Body of pancreas (tissue), 4 donors: ENCODE measurements at regions of chr16 and their contacts with region 1.

Region 1: DNA sequence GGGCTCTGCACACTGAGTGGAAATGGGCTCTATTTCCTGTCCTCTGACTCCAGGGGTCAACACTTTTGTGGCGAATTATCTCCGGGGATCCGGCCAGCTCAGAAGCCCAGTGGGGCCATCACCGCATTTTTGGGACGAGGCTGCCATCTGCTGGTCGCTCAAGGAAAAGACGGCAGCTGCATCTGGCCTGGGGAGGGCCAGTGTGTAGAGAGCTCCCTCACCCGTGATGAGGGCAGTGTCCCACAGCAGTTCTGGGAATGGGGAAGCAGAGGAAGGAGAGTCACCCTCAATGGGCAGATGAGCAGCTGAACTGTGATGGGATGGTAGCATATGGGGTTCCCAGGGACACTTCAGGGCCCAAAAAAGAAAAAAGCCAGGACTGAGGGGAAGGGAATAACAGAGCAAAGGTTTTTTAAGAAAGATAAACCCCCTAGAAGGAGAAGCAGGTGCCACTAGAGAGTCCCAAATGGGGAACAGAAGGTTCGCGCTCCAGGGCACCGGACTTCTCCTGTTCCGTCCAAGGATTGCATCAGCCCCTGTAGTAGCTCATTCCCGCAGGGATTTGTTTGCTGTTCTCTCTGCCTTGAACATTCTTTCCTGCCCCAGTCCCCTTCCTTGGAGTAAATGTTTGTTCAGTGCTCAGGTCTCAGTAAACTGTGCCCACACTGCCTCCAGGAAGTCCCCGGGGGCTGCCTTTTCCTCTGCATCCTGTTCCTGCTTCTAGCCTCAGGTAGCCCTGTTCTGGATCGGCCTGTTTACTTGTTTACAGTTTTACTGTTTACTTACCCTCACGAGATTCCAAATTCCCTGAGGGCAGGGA is 9.3 kb upstream of the ABCC12 start:
- DNase-seq: peak; percentile 70 to 74 (median 74)
- ATAC-seq: peak; percentile 88
- H3K4me3 ChIP-seq: no peak overlapping the region
- H3K27ac ChIP-seq: no peak overlapping the region
- H3K4me1 ChIP-seq: peaks cover 9% of the 10 kb centered on the region
- H3K27me3 ChIP-seq: no peaks in the 10 kb centered on the region
- CTCF ChIP-seq: peak; percentile 68 to 87 (median 82)
- POLR2A ChIP-seq: no peak

Region 2: GRCh38 chr16:47045023-47045422 is 1120.1 kb before region 1 on chr16:
- intact Hi-C with region 1: loop called (anchors 10 kb)
- DNase-seq: no peak
- ATAC-seq: no peak
- H3K4me3 ChIP-seq: no peak overlapping the region
- H3K27ac ChIP-seq: no peak overlapping the region
- H3K4me1 ChIP-seq: no peaks in the 10 kb centered on the region
- H3K27me3 ChIP-seq: no peaks in the 10 kb centered on the region
- CTCF ChIP-seq: no peak
- POLR2A ChIP-seq: no peak

Region 3: GRCh38 chr16:47141773-47142485 is 1023.2 kb before region 1 on chr16:
- intact Hi-C with region 1: loop called (anchors 10 kb)
- DNase-seq: peak; percentile 80 to 83 (median 82)
- ATAC-seq: peak; percentile 81
- H3K4me3 ChIP-seq: no peak overlapping the region
- H3K27ac ChIP-seq: no peak overlapping the region
- H3K4me1 ChIP-seq: peaks cover 22% of the 10 kb centered on the region
- H3K27me3 ChIP-seq: no peaks in the 10 kb centered on the region
- CTCF ChIP-seq: peak; percentile 74 to 93 (median 88)
- POLR2A ChIP-seq: no peak

Region 4: GRCh38 chr16:48231727-48232492 is 66.8 kb after region 1 on chr16:
- intact Hi-C with region 1: no loop called
- DNase-seq: peak in 2 of 4 donors; percentile 29 to 31
- ATAC-seq: no peak
- H3K4me3 ChIP-seq: no peak overlapping the region
- H3K27ac ChIP-seq: no peak overlapping the region
- H3K4me1 ChIP-seq: no peaks in the 10 kb centered on the region
- H3K27me3 ChIP-seq: no peaks in the 10 kb centered on the region
- CTCF ChIP-seq: peak in 4 of 7 experiments; percentile 14 to 28 (median 18)
- POLR2A ChIP-seq: no peak

Region 5: GRCh38 chr16:48373258-48374029 is 208.3 kb after region 1 on chr16:
- intact Hi-C with region 1: no loop called
- DNase-seq: no peak
- ATAC-seq: no peak
- H3K4me3 ChIP-seq: no peak overlapping the region
- H3K27ac ChIP-seq: no peak overlapping the region
- H3K4me1 ChIP-seq: peaks cover 43% of the 10 kb centered on the region
- H3K27me3 ChIP-seq: no peaks in the 10 kb centered on the region
- CTCF ChIP-seq: no peak
- POLR2A ChIP-seq: no peak